CD8-positive, alpha-beta T cell (primary cell): ENCODE measurements at regions of chr19 and their contacts with region 1.

Region 1: GRCh38 chr19:14517840-14518505 is at the start of gene DNAJB1:
- DNase-seq: peak in 7 of 9 experiments; percentile 51 to 82 (median 61)
- ATAC-seq: peak; percentile 2
- H3K4me3 ChIP-seq: peak within 1 kb of the TSS; percentile 80 to 97
- H3K4me3 Mint-ChIP-seq: peak within 1 kb of the TSS; percentile 95
- H3K27ac ChIP-seq: peak within 1 kb of the TSS; percentile 97 to 99
- H3K27ac Mint-ChIP-seq: peak within 1 kb of the TSS; percentile 97
- H3K4me1 ChIP-seq: peaks cover 68% of the 10 kb centered on the region
- H3K4me1 Mint-ChIP-seq: peaks cover 67% of the 10 kb centered on the region
- H3K27me3 ChIP-seq: no peaks in the 10 kb centered on the region
- H3K27me3 Mint-ChIP-seq: no peaks in the 10 kb centered on the region
- CTCF ChIP-seq: no peak
- total RNA-seq, gene DNAJB1: 963 to 995 TPM

Region 2: DNA sequence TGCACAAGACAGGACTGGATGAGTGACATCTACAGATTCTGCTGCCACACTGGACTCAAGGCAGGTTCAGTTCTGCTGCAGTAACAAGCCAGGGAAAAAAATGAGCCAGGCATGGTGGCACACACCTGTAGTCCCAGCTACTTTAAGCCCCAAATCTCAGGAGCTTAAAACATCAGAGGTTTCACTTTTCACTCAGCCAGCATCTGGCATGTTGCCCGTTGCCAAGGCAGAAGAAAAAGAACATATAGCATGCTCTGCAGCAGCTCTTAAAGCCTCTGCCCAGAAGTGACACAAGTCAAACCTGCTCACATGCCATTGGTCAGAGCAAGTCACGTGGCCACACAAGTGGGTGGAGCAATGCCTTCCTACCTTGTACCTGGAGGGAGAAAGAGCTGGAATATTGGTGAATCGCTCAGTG is 151.5 kb before region 1 on chr19:
- CTCF ChIA-PET with region 1: no interaction called
- POLR2A ChIA-PET with region 1: interaction called, 3 read pairs
- intact Hi-C with region 1: loop called in 1 of 2 experiments (anchors 5 kb)
- DNase-seq: peak; percentile 83 to 97 (median 90)
- ATAC-seq: peak; percentile 45
- H3K4me3 ChIP-seq: no peak overlapping the region
- H3K4me3 Mint-ChIP-seq: peak overlapping the region; percentile 57
- H3K27ac ChIP-seq: peak overlapping the region; percentile 98 to 100
- H3K27ac Mint-ChIP-seq: peak overlapping the region; percentile 99
- H3K4me1 ChIP-seq: peaks cover 81% of the 10 kb centered on the region
- H3K4me1 Mint-ChIP-seq: peaks cover 68% of the 10 kb centered on the region
- H3K27me3 ChIP-seq: no peaks in the 10 kb centered on the region
- H3K27me3 Mint-ChIP-seq: no peaks in the 10 kb centered on the region
- CTCF ChIP-seq: no peak

Region 3: DNA sequence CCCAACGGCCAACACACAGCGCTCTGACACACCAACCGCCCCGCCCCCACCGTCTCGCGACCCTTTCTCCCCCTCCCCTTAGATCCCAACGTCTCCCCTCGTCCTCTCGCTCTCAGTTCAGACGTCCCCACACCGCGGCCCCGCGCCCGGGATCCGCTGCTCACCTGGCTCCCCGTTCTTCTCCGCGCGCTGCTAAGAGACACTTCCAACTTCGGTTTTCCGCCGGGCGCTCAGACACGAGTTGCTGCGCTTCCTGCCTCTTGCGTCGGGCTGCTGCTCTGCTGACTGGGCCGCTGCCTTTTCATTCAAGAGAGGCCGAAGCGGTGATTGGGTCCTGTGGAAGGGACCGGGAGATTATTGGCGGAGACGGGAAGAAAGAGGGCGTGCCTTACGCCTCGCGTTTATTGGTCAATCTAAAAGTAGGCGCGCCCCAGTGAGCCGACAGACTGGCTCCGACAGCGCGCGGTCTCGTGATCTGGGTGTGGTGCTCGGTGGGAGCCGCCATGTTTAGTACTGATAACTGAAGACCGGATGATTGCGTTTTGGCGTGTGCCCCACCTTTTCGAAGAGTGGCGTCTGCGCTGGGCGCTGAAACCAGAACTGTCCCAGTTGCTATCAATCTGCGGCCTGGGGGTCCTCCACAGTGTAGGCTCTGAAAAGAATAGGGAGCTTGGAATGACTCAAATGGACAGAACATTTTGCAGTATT is 98.7 kb before region 1 on chr19 and contains the start of gene DDX39A:
- CTCF ChIA-PET with region 1: interaction called, 3 read pairs
- POLR2A ChIA-PET with region 1: interaction called, 6 read pairs
- intact Hi-C with region 1: loop called in 1 of 2 experiments (anchors 1 kb)
- DNase-seq: peak; percentile 92 to 99 (median 96)
- ATAC-seq: peak; percentile 86
- H3K4me3 ChIP-seq: peak within 1 kb of the TSS; percentile 63 to 96
- H3K4me3 Mint-ChIP-seq: peak within 1 kb of the TSS; percentile 92
- H3K27ac ChIP-seq: peak within 1 kb of the TSS; percentile 61 to 94
- H3K27ac Mint-ChIP-seq: peak within 1 kb of the TSS; percentile 95
- H3K4me1 ChIP-seq: peaks cover 42% of the 10 kb centered on the region
- H3K4me1 Mint-ChIP-seq: peaks cover 42% of the 10 kb centered on the region
- H3K27me3 ChIP-seq: no peaks in the 10 kb centered on the region
- H3K27me3 Mint-ChIP-seq: no peaks in the 10 kb centered on the region
- CTCF ChIP-seq: no peak
- total RNA-seq, gene DDX39A: 342 to 372 TPM

Region 4: DNA sequence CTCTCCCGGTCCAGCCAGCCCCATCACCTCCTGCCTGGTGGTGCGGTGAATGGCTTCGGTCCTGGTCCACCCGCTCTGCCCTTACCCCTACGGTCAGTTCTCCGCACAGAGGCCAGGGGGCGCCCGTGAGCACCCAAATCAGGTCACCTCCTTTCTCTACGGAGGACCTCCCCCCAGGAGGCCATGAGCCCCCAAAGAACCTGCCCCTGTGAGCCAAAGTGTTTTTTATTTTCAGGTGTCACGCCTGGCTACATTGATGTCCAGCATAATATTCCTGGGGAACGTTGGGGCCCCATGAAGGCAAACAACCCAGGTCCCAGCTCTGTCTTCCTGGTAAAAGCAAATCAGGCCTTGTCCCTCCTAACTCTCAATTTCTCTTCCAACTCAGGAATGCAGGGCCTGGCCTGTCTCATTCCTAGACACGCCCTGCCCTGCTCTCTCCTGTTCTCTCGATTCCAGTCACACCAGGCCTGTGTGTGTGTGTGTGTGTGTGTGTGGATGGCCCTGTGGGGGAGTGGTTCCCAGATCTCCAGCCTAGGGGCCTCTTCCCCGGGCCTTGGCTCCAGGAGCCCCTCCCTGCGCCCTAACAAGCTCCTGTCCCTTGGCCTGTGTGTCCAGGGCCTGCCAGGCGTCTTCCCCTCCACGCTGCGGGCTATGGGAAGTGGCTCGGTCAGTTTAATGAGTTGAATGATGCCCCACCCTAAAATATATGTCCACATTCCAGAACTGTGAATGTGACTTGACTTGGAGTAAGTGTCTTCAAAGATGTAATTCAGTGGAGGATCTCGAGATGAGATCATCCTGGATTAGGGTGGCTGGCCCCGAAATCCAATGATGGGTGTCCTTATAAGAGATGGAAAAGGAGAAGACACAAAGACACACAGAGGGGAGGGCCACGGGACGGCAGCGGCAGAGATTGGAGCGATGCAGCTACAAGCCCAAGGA is 12.2 kb before region 1 on chr19:
- CTCF ChIA-PET with region 1: interaction called, 18 read pairs
- POLR2A ChIA-PET with region 1: interaction called, 133 read pairs
- intact Hi-C with region 1: loop called (anchors 1 kb)
- DNase-seq: peak; percentile 50 to 87 (median 76)
- ATAC-seq: peak; percentile 51
- H3K4me3 ChIP-seq: peak overlapping the region in 1 of 2 experiments; percentile 25
- H3K4me3 Mint-ChIP-seq: peak overlapping the region; percentile 56
- H3K27ac ChIP-seq: peak overlapping the region; percentile 62 to 76
- H3K27ac Mint-ChIP-seq: peak overlapping the region; percentile 96
- H3K4me1 ChIP-seq: peaks cover 49% of the 10 kb centered on the region
- H3K4me1 Mint-ChIP-seq: peaks cover 64% of the 10 kb centered on the region
- H3K27me3 ChIP-seq: no peaks in the 10 kb centered on the region
- H3K27me3 Mint-ChIP-seq: no peaks in the 10 kb centered on the region
- CTCF ChIP-seq: peak; percentile 82

Region 5: GRCh38 chr19:14536926-14537692 is 19.1 kb after region 1 on chr19:
- CTCF ChIA-PET with region 1: interaction called, 3 read pairs
- POLR2A ChIA-PET with region 1: interaction called, 50 read pairs
- intact Hi-C with region 1: no loop called
- DNase-seq: peak in 4 of 9 experiments; percentile 49 to 67 (median 56)
- ATAC-seq: peak; percentile 80
- H3K4me3 ChIP-seq: no peak overlapping the region
- H3K4me3 Mint-ChIP-seq: no peak overlapping the region
- H3K27ac ChIP-seq: no peak overlapping the region
- H3K27ac Mint-ChIP-seq: no peak overlapping the region
- H3K4me1 ChIP-seq: peaks cover 20% of the 10 kb centered on the region
- H3K4me1 Mint-ChIP-seq: peaks cover 46% of the 10 kb centered on the region
- H3K27me3 ChIP-seq: no peaks in the 10 kb centered on the region
- H3K27me3 Mint-ChIP-seq: no peaks in the 10 kb centered on the region
- CTCF ChIP-seq: no peak

Region 6: GRCh38 chr19:14556662-14557188 is 38.8 kb after region 1 on chr19:
- CTCF ChIA-PET with region 1: interaction called, 14 read pairs
- POLR2A ChIA-PET with region 1: interaction called, 16 read pairs
- intact Hi-C with region 1: no loop called
- DNase-seq: peak; percentile 44 to 85 (median 72)
- ATAC-seq: peak; percentile 87
- H3K4me3 ChIP-seq: peak overlapping the region; percentile 12 to 26
- H3K4me3 Mint-ChIP-seq: peak overlapping the region; percentile 60
- H3K27ac ChIP-seq: peak overlapping the region in 1 of 2 experiments; percentile 70
- H3K27ac Mint-ChIP-seq: peak overlapping the region; percentile 90
- H3K4me1 ChIP-seq: peaks cover 53% of the 10 kb centered on the region
- H3K4me1 Mint-ChIP-seq: peaks cover 53% of the 10 kb centered on the region
- H3K27me3 ChIP-seq: no peaks in the 10 kb centered on the region
- H3K27me3 Mint-ChIP-seq: no peaks in the 10 kb centered on the region
- CTCF ChIP-seq: peak; percentile 96